B cell (primary cell): ENCODE measurements at regions of chr10 and their contacts with region 1.

Region 1: DNA sequence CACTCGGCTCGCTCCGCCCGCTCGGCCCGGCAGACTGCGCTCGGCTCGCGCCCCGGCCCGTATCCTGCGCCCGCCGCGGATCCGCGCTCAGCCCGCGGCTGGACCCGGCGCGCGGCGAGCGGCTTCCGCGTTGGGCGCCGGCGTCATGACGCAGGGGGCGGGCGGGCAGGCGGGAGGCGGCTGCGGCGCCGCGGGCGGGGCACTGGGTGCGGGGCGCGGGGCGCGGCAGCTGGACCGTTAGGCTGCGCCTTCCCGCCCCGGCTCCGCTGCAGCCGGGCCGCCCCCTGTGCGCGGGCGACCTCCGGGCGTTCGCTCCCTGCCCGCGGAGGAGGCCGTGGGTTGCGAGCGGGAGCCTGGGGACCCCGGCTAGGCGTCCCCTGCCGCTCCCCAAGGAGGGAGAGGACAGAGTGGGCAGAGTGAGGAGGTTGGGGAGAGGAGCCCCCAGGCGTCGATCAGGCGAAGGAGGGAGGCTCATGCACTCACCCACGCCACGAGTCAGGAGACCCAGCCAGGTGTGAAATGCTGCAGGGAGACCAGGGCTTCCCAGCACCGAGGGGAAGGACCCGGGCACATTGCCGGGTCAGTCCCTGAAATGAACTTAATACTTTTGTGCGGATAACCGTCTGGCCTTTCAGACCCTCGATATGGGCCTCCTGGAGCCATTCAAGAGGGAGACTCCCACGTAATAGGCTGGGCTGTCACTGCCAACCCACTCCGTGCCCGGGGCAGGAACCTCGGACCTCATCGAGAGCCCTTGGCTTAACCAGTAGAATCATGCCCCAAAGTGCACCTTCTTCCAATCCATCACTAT is at the start of gene PIP4K2A:
- DNase-seq: peak; percentile 87
- ATAC-seq: peak; percentile 81
- H3K4me3 ChIP-seq: peak within 1 kb of the TSS; percentile 70 to 92 (median 90)
- H3K4me3 Mint-ChIP-seq: peak within 1 kb of the TSS; percentile 91
- H3K27ac ChIP-seq: peak within 1 kb of the TSS; percentile 78 to 85
- H3K27ac Mint-ChIP-seq: peak within 1 kb of the TSS; percentile 89
- H3K4me1 ChIP-seq: peaks cover 31 to 38% of the 10 kb centered on the region in 2 donors
- H3K4me1 Mint-ChIP-seq: peaks cover 37% of the 10 kb centered on the region
- H3K27me3 ChIP-seq: no peaks in the 10 kb centered on the region
- H3K27me3 Mint-ChIP-seq: no peaks in the 10 kb centered on the region
- CTCF ChIP-seq: no peak
- total RNA-seq, gene PIP4K2A: 100 and 103 TPM in 2 replicates

Region 2: DNA sequence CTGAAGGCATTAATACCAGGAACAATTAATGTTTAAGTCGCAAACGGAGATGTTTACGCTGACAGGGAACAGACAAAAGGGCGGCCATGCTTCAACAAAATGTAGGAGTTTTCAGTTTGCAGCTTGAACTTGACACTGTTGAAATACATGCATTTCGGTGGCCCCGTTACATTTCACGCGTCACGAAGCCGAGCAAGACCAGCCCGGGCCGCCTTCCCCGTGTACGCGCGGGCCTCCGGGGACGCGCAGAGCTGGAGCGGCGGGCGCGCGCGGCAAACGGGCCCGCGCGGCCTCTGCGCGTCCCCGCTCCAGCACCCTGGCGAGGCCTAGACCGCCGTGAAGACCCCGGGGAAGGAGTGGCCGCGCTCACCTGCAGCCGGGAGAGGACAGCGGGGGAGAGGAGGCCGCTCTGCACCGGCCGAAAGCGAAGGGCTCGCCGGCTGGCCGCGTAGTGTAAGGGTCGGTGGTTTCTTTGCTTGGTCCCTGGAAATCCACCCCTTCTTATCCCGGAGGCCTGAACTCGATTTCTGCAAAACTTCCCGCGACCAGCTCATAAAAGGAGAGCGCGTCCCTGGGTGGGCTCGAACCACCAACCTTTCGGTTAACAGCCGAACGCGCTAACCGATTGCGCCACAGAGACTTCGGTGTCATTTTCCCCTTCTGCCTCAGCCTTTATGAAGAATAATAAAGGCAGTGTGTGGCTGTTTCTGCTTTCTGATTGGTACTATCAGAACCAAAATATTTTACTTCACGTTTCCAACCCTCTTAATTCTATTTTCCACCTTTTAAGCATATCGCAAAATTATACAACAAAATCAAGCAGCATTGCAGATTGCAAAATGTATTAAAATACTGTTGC is 485.5 kb before region 1 on chr10:
- CTCF ChIA-PET with region 1: no interaction called
- POLR2A ChIA-PET with region 1: no interaction called
- intact Hi-C with region 1: loop called (anchors 1 kb)
- DNase-seq: peak; percentile 96
- ATAC-seq: peak; percentile 81
- H3K4me3 ChIP-seq: peak overlapping the region; percentile 68 to 83 (median 81)
- H3K4me3 Mint-ChIP-seq: peak overlapping the region; percentile 90
- H3K27ac ChIP-seq: peak overlapping the region; percentile 66 to 77
- H3K27ac Mint-ChIP-seq: peak overlapping the region; percentile 100
- H3K4me1 ChIP-seq: no peaks in the 10 kb centered on the region
- H3K4me1 Mint-ChIP-seq: peaks cover 14% of the 10 kb centered on the region
- H3K27me3 ChIP-seq: no peaks in the 10 kb centered on the region
- H3K27me3 Mint-ChIP-seq: peaks cover 7% of the 10 kb centered on the region
- CTCF ChIP-seq: no peak

Region 3: DNA sequence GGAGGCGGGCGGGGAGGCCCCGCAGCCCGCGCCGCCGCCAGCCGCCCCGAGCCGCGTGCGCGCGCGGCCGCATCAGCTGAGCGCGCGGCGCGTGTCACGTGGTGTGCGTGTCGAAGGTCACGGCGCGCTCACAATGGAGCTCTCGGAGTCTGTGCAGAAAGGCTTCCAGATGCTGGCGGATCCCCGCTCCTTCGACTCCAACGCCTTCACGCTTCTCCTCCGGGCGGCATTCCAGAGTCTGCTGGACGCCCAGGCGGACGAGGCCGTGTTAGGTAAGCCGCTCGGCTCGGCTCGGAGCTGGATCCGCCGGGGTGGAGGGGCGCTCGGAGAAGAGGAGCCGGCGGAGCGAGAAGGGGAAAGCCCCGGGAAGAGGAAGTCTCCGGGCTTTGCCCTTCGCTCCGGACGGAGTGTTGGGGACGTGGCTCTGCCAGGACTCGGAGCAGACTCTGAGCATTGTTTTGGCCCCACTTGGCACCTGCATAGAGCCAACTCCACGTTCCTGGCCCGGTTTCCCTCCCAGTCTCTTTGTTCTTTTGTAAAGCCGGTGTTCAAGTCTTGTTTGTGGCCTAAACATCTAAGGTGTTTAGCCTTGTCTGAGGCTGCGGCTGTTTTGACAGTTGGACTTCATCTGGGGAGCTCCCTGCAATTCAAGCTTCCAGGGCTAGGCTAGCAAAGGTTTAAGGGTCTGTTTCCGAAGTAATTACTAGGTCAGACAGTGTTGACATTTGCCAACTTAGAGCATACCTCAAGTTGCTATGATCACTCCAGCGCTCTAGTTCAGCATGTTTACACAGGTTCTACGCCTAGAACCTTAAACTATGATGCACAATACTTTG is 398.2 kb before region 1 on chr10 and contains the start of gene COMMD3:
- CTCF ChIA-PET with region 1: no interaction called
- POLR2A ChIA-PET with region 1: interaction called, 4 read pairs
- intact Hi-C with region 1: loop called (anchors 5 kb)
- DNase-seq: peak; percentile 95
- ATAC-seq: peak; percentile 56
- H3K4me3 ChIP-seq: peak within 1 kb of the TSS; percentile 65 to 90 (median 84)
- H3K4me3 Mint-ChIP-seq: peak within 1 kb of the TSS; percentile 97
- H3K27ac ChIP-seq: peak within 1 kb of the TSS; percentile 88 to 92
- H3K27ac Mint-ChIP-seq: peak within 1 kb of the TSS; percentile 98
- H3K4me1 ChIP-seq: peaks cover 21 to 34% of the 10 kb centered on the region in 2 donors
- H3K4me1 Mint-ChIP-seq: peaks cover 36% of the 10 kb centered on the region
- H3K27me3 ChIP-seq: no peaks in the 10 kb centered on the region
- H3K27me3 Mint-ChIP-seq: no peaks in the 10 kb centered on the region
- CTCF ChIP-seq: no peak
- total RNA-seq, gene COMMD3: 74.3 and 78.0 TPM in 2 replicates

Region 4: GRCh38 chr10:22630234-22631174 is 84.2 kb before region 1 on chr10:
- CTCF ChIA-PET with region 1: interaction called, 3 read pairs
- POLR2A ChIA-PET with region 1: no interaction called
- intact Hi-C with region 1: loop called (anchors 5 kb)
- DNase-seq: peak; percentile 78
- ATAC-seq: peak; percentile 83
- H3K4me3 ChIP-seq: peak overlapping the region; percentile 7 to 48 (median 30)
- H3K4me3 Mint-ChIP-seq: peak overlapping the region; percentile 77
- H3K27ac ChIP-seq: peak overlapping the region; percentile 87 to 88
- H3K27ac Mint-ChIP-seq: peak overlapping the region; percentile 90
- H3K4me1 ChIP-seq: peaks cover 64 to 81% of the 10 kb centered on the region in 2 donors
- H3K4me1 Mint-ChIP-seq: peaks cover 92% of the 10 kb centered on the region
- H3K27me3 ChIP-seq: no peaks in the 10 kb centered on the region
- H3K27me3 Mint-ChIP-seq: no peaks in the 10 kb centered on the region
- CTCF ChIP-seq: no peak

Region 5: DNA sequence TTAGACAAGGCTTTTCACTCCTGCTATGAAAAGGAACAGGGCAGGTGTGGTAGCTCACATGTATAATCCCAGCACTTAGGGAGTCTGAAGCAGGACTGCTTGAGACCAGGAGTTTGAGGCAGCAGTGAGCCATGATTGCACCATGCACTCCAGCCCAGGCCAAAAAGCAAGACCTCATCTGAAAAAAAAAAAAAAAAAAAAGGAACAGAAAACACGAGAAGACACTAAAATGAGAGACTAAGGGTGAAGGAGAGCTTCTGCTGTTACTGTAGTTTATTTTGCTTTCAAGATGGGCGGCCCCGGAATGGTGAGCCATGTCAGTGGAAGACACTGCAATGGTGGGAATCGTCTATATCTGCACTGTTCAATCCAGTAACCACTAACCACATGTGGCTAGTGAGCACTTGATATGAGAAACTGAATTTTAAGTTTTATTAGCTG is 10.2 kb before region 1 on chr10:
- CTCF ChIA-PET with region 1: interaction called, 4 read pairs
- POLR2A ChIA-PET with region 1: interaction called, 6 read pairs
- intact Hi-C with region 1: loop called (anchors 1 kb)
- DNase-seq: peak; percentile 61
- ATAC-seq: peak; percentile 70
- H3K4me3 ChIP-seq: peak overlapping the region in 2 of 5 experiments; percentile 12 to 16
- H3K4me3 Mint-ChIP-seq: peak overlapping the region; percentile 79
- H3K27ac ChIP-seq: peak overlapping the region; percentile 25 to 57
- H3K27ac Mint-ChIP-seq: peak overlapping the region; percentile 91
- H3K4me1 ChIP-seq: peaks cover 79 to 80% of the 10 kb centered on the region in 2 donors
- H3K4me1 Mint-ChIP-seq: peaks cover 90% of the 10 kb centered on the region
- H3K27me3 ChIP-seq: no peaks in the 10 kb centered on the region
- H3K27me3 Mint-ChIP-seq: no peaks in the 10 kb centered on the region
- CTCF ChIP-seq: no peak